ENCODE measurements at regions of chr21 and their contacts with region 1.

Region 1: GRCh38 chr21:43667191-43667904 is 8.0 kb downstream of the RRP1B start:
- DNase-seq: no peak
- ATAC-seq: peak; percentile 72
- H3K4me3 Mint-ChIP-seq: no peak overlapping the region
- H3K27ac Mint-ChIP-seq: peak overlapping the region; percentile 41
- H3K4me1 Mint-ChIP-seq: peaks cover 17% of the 10 kb centered on the region
- H3K27me3 Mint-ChIP-seq: no peaks in the 10 kb centered on the region
- CTCF ChIP-seq: no peak

Region 2: DNA sequence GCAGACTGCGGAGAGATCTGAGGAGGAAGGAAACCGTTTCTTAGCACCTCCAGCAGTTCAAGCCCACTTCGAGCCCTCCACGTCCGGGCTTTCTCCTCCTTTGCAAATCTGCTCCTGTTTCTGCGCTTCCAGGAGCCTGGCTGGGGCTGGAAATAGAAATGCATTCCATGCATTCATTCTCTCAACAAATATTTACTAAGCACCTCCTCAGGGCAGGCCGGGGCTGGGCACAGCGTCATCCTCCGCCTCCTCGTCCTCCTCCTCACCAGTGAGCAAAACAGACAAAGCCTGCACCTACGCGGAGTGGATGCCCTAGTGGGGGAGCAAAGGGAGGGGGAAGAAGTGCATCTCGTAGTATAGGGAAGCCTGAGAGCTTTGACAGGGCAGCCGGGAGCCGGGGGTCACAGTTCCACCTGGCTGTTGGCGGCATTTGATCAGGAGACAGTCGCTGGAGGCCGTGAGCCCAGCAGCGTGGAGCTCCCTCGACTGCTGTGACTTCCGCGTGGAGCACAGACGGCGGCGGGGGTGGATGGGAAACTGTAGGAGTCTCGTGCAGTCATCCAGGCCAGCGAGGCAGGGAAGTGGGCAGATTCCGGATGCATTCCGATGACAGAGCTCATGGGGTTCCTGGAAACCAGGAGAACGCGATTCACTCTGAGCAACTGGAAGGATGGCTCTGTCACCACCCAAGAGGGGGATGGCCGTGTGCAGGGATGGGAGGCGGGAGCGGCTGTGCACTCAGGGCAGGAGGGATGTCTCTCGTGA is 333.9 kb before region 1 on chr21:
- CTCF ChIA-PET with region 1: no interaction called
- POLR2A ChIA-PET with region 1: no interaction called
- intact Hi-C with region 1: no loop called
- DNase-seq: no peak
- ATAC-seq: no peak
- H3K4me3 Mint-ChIP-seq: no peak overlapping the region
- H3K27ac Mint-ChIP-seq: no peak overlapping the region
- H3K4me1 Mint-ChIP-seq: peaks cover 19% of the 10 kb centered on the region
- H3K27me3 Mint-ChIP-seq: no peaks in the 10 kb centered on the region
- CTCF ChIP-seq: no peak

Region 3: DNA sequence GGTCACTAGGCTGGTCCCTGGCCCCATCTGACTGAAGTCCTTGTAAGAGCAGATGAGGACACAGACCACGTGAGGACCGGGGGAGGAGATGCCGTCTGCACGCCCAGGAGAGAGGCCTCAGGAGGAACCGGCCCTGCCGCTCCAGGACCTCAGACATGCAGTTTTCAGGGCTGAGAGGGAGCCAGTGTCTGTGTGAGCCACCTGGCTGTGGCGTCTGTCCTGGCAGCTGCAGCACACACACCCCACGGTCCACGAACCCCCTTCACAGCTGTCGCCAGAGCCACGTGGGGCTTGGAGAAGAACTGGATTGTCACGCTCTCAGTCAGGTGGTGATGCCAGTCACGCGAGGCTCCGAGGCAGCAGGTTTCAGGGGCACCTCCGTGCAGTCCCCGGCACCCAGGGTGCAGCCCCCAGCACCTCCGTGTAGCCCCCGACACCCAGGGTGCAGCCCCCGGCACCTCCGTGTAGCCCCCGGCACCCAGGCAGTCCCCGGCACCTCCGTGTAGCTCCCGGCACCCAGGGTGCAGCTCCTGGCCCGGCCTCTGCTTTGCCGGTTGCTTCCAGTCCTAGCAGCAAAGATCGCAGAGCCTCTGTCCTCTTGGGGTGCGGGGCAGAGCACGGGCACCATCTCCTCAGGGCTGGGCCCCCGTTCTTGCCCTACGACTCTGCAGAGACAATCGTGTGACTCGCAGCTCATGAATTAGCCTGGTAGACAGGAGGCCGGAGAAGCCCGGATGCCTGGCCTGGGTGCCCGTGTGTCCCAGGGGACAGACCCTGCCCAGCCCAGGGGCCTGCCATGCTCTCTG is 1169.5 kb after region 1 on chr21:
- CTCF ChIA-PET with region 1: no interaction called
- POLR2A ChIA-PET with region 1: interaction called, 10 read pairs
- intact Hi-C with region 1: no loop called
- DNase-seq: peak; percentile 10
- ATAC-seq: no peak
- H3K4me3 Mint-ChIP-seq: no peak overlapping the region
- H3K27ac Mint-ChIP-seq: no peak overlapping the region
- H3K4me1 Mint-ChIP-seq: no peaks in the 10 kb centered on the region
- H3K27me3 Mint-ChIP-seq: peaks cover 17% of the 10 kb centered on the region
- CTCF ChIP-seq: no peak